H1 (cell line): ENCODE measurements at regions of chr16 and their contacts with region 1.

Region 1: DNA sequence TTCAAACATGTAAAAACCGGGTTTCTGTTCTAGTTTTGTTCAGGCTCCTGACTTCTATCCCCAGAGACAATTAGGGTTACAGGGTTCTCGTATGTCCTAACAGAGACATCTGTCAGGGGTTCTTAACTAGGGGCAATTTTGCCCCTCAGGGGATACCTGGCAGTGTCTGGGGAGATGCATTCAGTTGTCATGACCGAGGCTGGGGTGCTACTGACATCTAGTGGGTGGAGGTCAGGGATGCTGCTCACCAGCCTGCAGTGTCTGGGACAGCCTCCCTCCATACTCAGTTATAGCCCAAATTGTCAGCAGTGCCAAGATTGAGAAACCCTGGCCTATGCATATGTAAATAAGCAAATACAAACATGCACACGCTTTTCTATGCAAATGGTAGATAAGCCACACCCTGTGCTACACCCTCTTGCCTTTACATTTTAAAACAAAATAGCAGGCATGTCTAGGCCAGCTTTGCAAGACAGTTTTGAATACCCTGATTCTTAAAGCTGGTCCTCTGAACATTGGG is 37.4 kb downstream of the CLEC16A start:
- DNase-seq: peak in 1 of 2 experiments; percentile 69
- H3K4me3 ChIP-seq: no peak overlapping the region
- H3K27ac ChIP-seq: no peak overlapping the region
- H3K4me1 ChIP-seq: 0 out of 7 replicates have a peak, but pooled peaks cover 0 to 2% (median 0%) of the 10 kb centered on the region in 4 experiments
- H3K27me3 ChIP-seq: no peaks in the 10 kb centered on the region
- CTCF ChIP-seq: peak; percentile 75 to 94 (median 86)
- EP300 ChIP-seq: no peak
- POLR2A ChIP-seq: no peak
- RAD21 ChIP-seq: peak; percentile 52 to 66

Region 2: DNA sequence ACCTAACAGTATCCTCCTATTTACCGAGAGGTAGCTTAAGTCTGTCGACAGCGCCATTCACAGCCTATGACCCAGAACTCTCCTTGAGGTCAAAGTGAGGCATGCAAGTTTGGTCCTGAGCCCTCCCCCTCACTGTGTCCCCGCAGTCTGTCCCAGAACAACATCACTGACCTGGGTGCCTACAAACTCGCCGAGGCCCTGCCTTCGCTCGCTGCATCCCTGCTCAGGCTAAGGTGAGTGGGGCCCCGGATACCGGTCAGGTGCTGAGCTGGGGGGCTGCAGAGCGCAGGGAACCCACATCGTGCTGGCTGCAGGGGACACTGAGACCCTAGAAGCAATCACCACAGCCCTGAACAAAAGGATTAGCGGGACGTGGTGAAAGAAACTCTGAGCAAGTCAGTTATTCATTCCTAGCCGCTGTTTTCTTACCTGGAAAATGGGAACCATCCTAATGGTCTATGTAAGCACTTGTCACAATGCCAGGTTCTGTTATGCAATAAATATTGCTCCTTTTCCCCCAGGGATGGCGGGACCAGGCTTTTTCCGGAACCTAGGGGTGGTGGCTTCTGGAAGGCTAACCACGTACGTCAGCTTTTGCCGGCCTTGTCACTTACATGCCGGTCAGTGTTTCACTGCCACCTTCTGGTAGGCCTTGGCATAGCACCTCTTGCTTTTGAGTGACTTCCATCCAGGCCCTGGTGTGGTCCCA is 63.3 kb before region 1 on chr16:
- CTCF ChIA-PET with region 1: no interaction called
- POLR2A ChIA-PET with region 1: no interaction called
- DNase-seq: peak; percentile 91 to 97
- H3K4me3 ChIP-seq: 0 out of 8 replicates have a peak overlapping the region, but pooled peaks of 1 of the 4 experiments have one; percentile 0
- H3K27ac ChIP-seq: no peak overlapping the region
- H3K4me1 ChIP-seq: peaks cover 0 to 8% (median 0%) of the 10 kb centered on the region in 4 experiments; a peak in 2 of 7 replicates
- H3K27me3 ChIP-seq: peaks cover 0 to 3% (median 0%) of the 10 kb centered on the region in 4 experiments; a peak in 1 of 7 replicates
- CTCF ChIP-seq: peak; percentile 85 to 100 (median 96)
- EP300 ChIP-seq: no peak
- POLR2A ChIP-seq: no peak
- RAD21 ChIP-seq: peak; percentile 96

Region 3: GRCh38 chr16:10937068-10937859 is 44.5 kb before region 1 on chr16:
- CTCF ChIA-PET with region 1: no interaction called
- POLR2A ChIA-PET with region 1: no interaction called
- DNase-seq: no peak
- H3K4me3 ChIP-seq: no peak overlapping the region
- H3K27ac ChIP-seq: no peak overlapping the region
- H3K4me1 ChIP-seq: peaks cover 0 to 9% (median 5%) of the 10 kb centered on the region in 4 experiments; a peak in 5 of 7 replicates
- H3K27me3 ChIP-seq: no peaks in the 10 kb centered on the region; a peak in 2 of 7 replicates
- CTCF ChIP-seq: no peak
- EP300 ChIP-seq: no peak
- POLR2A ChIP-seq: no peak
- RAD21 ChIP-seq: no peak

Region 4: GRCh38 chr16:10954903-10955302 is 26.9 kb before region 1 on chr16:
- CTCF ChIA-PET with region 1: interaction called, 16 read pairs
- POLR2A ChIA-PET with region 1: interaction called, 3 read pairs
- DNase-seq: no peak
- H3K4me3 ChIP-seq: no peak overlapping the region
- H3K27ac ChIP-seq: no peak overlapping the region
- H3K4me1 ChIP-seq: peaks cover 3 to 10% (median 7%) of the 10 kb centered on the region in 4 experiments; a peak in 6 of 7 replicates
- H3K27me3 ChIP-seq: no peaks in the 10 kb centered on the region
- CTCF ChIP-seq: no peak
- EP300 ChIP-seq: no peak
- POLR2A ChIP-seq: no peak
- RAD21 ChIP-seq: no peak

Region 5: DNA sequence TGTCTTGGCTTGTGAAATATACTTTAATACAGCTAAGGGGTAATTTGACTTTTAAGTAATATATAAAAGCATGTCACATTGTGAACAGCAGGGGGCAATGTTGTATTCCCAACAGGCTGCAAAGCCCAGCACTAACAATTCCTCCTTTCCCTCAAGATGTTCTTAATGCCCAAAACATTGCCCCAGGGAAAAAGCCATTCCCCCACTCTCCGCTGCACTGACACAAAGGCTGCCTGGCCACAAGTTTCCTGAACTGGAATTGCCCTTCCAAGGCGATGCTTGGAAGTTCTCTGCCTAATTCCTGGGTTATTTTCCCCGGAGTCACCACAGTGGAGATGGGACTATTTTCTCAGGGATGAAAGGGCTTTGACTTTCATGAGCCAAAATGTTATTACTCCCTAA is 10.2 kb before region 1 on chr16:
- CTCF ChIA-PET with region 1: interaction called, 67 read pairs
- POLR2A ChIA-PET with region 1: no interaction called
- DNase-seq: no peak
- H3K4me3 ChIP-seq: no peak overlapping the region
- H3K27ac ChIP-seq: no peak overlapping the region
- H3K4me1 ChIP-seq: peaks cover 0 to 2% (median 0%) of the 10 kb centered on the region in 4 experiments; a peak in 2 of 7 replicates
- H3K27me3 ChIP-seq: no peaks in the 10 kb centered on the region
- CTCF ChIP-seq: peak in 2 of 3 experiments; percentile 63 to 70; a peak in 3 of 4 replicates
- EP300 ChIP-seq: no peak
- POLR2A ChIP-seq: no peak
- RAD21 ChIP-seq: peak; percentile 81 to 84

Region 6: DNA sequence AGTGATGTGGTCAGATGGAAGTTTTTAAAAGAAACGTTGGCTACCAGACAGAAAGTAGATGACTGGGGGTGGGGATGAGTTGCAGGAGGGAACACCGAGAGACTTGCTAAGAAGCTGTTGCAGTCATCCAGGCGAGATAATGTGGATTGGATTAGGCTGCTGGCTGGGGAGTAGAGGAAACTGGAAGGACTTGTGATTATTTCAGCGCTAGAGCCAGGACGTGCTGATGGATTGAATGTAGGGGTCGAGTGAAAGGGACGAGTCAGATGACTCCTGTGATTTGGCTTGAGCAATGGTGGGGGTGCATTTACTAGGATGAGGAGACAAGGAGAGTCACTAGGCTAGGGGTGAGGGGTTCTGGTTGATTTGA is 51.1 kb after region 1 on chr16:
- CTCF ChIA-PET with region 1: no interaction called
- POLR2A ChIA-PET with region 1: no interaction called
- DNase-seq: no peak
- H3K4me3 ChIP-seq: no peak overlapping the region
- H3K27ac ChIP-seq: no peak overlapping the region
- H3K4me1 ChIP-seq: peaks cover 0 to 6% (median 0%) of the 10 kb centered on the region in 4 experiments; a peak in 3 of 7 replicates
- H3K27me3 ChIP-seq: no peaks in the 10 kb centered on the region
- CTCF ChIP-seq: no peak
- EP300 ChIP-seq: no peak
- POLR2A ChIP-seq: no peak
- RAD21 ChIP-seq: no peak

Region 7: GRCh38 chr16:11128265-11129141 is 146.7 kb after region 1 on chr16:
- CTCF ChIA-PET with region 1: no interaction called
- POLR2A ChIA-PET with region 1: no interaction called
- DNase-seq: no peak
- H3K4me3 ChIP-seq: no peak overlapping the region
- H3K27ac ChIP-seq: no peak overlapping the region
- H3K4me1 ChIP-seq: no peaks in the 10 kb centered on the region
- H3K27me3 ChIP-seq: no peaks in the 10 kb centered on the region
- CTCF ChIP-seq: no peak
- EP300 ChIP-seq: no peak
- POLR2A ChIP-seq: no peak
- RAD21 ChIP-seq: no peak